GM18951 (cell line): ENCODE measurements at regions of chr10 and their contacts with region 1.

Region 1: DNA sequence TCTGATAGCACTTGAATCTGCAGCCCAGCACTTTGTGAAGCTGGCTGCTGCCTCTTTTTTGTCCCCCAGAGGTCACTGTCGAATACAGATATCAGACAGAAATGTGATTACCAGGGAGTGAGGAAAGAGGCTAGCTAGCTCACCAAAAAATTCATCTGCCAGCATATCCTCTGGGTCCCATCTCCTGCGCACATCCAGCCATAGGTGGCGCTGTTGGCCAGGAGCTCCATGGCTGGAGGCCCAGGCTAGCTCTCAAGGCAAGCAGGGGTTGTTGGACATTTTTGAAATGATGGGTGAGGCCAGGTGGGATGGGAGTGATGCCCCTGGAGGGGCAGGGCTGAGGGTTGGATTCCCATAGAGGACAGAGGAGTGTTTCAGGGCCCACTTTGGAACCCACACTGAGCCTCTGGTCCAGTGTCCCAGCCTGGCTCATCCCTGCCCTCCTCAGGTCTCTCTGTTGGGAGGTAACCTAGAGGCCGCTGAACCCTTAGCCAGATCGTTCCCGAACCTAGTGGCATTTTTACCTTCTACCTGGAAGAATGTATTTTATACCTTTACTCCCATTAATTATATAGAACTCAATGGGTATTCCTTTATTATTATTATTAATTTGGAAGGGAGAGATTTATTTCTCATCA is 14.8 kb downstream of the DPCD start:
- POLR2A ChIP-seq: no peak

Region 2: DNA sequence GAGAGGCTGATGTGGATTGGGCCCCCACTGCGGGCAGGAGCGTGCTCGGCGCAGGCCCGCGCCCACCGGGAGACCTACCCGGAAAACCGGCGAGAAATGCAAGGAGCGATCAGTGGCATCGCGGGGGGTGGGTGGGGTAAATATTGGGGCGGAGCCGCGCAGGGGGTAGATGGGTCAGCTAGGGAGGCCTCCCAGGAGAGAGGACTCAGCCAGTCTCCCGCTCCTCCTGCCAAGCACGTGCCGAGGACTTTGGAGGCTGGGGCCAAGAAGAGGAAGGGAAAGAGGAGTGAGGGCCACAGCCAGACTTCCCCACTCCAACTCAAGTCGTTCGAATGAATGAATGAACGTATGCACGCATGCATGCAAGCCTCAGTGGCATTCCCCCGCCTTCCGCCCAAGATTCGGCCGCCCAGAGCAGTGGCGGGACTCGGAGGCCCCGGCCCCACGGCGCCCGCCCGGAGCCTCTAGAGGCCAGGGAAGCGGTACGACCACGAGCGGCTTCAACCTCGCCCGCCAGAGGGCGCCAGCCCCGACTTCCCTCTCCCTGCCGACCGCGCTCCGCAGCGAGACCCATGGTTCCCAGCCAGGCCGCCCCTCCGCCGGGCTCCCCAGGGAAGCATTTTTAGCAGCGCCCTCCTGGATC is 176.8 kb after region 1 on chr10:
- in situ Hi-C with region 1: loop called (anchors 10 kb)
- POLR2A ChIP-seq: no peak

Region 3: GRCh38 chr10:101818119-101818871 is 215.4 kb after region 1 on chr10 and contains the start of gene OGA:
- in situ Hi-C with region 1: no loop called
- POLR2A ChIP-seq: peak; percentile 94

Region 4: DNA sequence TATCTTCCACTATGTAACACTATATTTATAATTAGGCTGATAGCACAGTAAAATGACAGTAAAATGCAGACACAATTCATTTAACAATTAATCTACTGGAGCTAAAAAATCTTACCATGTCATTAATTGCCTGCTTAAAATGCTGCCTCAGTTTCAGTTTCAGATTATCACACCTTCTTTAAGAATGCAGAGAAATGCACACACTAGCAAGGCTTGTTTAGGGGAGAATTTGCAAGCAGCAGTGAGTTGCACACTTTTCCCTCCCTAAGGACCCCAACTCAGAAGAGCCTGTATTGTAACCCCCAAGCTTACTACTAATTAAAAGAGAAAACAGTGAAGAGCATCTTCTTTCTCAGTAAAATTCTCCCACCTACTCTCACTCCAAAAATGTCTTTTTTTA is 320.4 kb after region 1 on chr10:
- in situ Hi-C with region 1: no loop called
- POLR2A ChIP-seq: no peak

Region 5: GRCh38 chr10:102090772-102091171 is 487.9 kb after region 1 on chr10:
- in situ Hi-C with region 1: loop called (anchors 25 kb)
- POLR2A ChIP-seq: no peak